ENCODE measurements at regions of chr2 and their contacts with region 1.

Region 1: GRCh38 chr2:230798769-230799399 is 65.9 kb upstream of the ITM2C start:
- DNase-seq: peak in 11 of 14 experiments; percentile 15 to 79 (median 40)
- ATAC-seq: peak; percentile 39
- H3K4me3 ChIP-seq: no peak overlapping the region
- H3K4me3 Mint-ChIP-seq: no peak overlapping the region
- H3K27ac ChIP-seq: no peak overlapping the region
- H3K27ac Mint-ChIP-seq: peak overlapping the region; percentile 82
- H3K4me1 ChIP-seq: peaks cover 35% of the 10 kb centered on the region
- H3K4me1 Mint-ChIP-seq: peaks cover 16% of the 10 kb centered on the region
- H3K27me3 ChIP-seq: no peaks in the 10 kb centered on the region
- H3K27me3 Mint-ChIP-seq: no peaks in the 10 kb centered on the region
- CTCF ChIP-seq: peak; percentile 82

Region 2: DNA sequence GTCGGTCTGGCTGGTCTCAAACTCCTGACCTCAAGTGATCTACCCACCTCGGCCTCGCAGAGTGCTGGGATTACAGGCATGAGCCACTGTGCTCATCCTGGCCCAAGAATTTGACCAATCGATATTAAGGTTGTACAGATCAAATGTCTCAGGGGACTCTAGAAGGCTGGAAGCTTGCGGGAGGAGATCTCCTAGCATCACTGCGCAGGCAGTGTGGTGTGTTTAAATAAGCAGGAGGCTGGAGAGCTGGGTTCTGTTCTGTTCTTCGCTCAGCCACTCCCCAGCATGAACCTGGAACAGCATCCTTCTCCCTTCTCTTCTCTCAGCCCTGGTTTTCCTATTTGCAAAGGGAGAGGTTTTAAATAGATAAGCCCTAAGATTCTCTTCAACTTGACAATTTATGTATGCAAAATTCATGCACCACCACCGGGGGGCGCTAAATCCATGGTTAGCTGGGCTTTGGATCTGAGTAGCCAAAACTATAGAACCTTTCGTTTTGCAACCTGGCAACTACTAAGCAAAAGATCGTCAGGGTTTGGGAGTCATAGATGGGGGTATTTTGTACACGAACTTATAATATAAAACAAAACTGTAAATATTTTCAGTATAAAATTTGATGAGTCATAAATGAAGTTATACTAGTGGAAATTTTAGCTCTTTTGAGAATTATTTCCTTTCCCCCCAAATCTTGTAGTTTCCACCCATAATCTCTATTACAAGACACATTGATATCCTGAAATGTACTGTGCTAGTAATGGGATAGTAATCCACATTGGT is 790.8 kb before region 1 on chr2:
- CTCF ChIA-PET with region 1: interaction called, 3 read pairs
- POLR2A ChIA-PET with region 1: no interaction called
- intact Hi-C with region 1: loop called (anchors 2 kb)
- DNase-seq: peak; percentile 67 to 86 (median 78)
- ATAC-seq: peak; percentile 72
- H3K4me3 ChIP-seq: no peak overlapping the region
- H3K4me3 Mint-ChIP-seq: peak overlapping the region; percentile 7
- H3K27ac ChIP-seq: no peak overlapping the region
- H3K27ac Mint-ChIP-seq: no peak overlapping the region
- H3K4me1 ChIP-seq: no peaks in the 10 kb centered on the region
- H3K4me1 Mint-ChIP-seq: no peaks in the 10 kb centered on the region
- H3K27me3 ChIP-seq: no peaks in the 10 kb centered on the region
- H3K27me3 Mint-ChIP-seq: no peaks in the 10 kb centered on the region
- CTCF ChIP-seq: peak; percentile 93

Region 3: GRCh38 chr2:230614913-230615332 is 184.0 kb before region 1 on chr2:
- CTCF ChIA-PET with region 1: interaction called, 4 read pairs
- POLR2A ChIA-PET with region 1: no interaction called
- intact Hi-C with region 1: loop called (anchors 1 to 5 kb)
- DNase-seq: peak in 3 of 14 experiments; percentile 15 to 52 (median 17)
- ATAC-seq: peak; percentile 43
- H3K4me3 ChIP-seq: no peak overlapping the region
- H3K4me3 Mint-ChIP-seq: no peak overlapping the region
- H3K27ac ChIP-seq: no peak overlapping the region
- H3K27ac Mint-ChIP-seq: no peak overlapping the region
- H3K4me1 ChIP-seq: peaks cover 17% of the 10 kb centered on the region
- H3K4me1 Mint-ChIP-seq: peaks cover 12% of the 10 kb centered on the region
- H3K27me3 ChIP-seq: no peaks in the 10 kb centered on the region
- H3K27me3 Mint-ChIP-seq: no peaks in the 10 kb centered on the region
- CTCF ChIP-seq: no peak

Region 4: GRCh38 chr2:230658877-230659652 is 139.8 kb before region 1 on chr2:
- CTCF ChIA-PET with region 1: interaction called, 7 read pairs
- POLR2A ChIA-PET with region 1: interaction called, 7 read pairs
- intact Hi-C with region 1: loop called in 1 of 2 experiments (anchors 5 kb)
- DNase-seq: peak in 6 of 14 experiments; percentile 16 to 66 (median 37)
- ATAC-seq: peak; percentile 40
- H3K4me3 ChIP-seq: peak overlapping the region; percentile 1
- H3K4me3 Mint-ChIP-seq: peak overlapping the region; percentile 65
- H3K27ac ChIP-seq: peak overlapping the region in 1 of 2 donors; percentile 18
- H3K27ac Mint-ChIP-seq: peak overlapping the region; percentile 90
- H3K4me1 ChIP-seq: peaks cover 87% of the 10 kb centered on the region
- H3K4me1 Mint-ChIP-seq: peaks cover 92% of the 10 kb centered on the region
- H3K27me3 ChIP-seq: no peaks in the 10 kb centered on the region
- H3K27me3 Mint-ChIP-seq: no peaks in the 10 kb centered on the region
- CTCF ChIP-seq: no peak

Region 5: DNA sequence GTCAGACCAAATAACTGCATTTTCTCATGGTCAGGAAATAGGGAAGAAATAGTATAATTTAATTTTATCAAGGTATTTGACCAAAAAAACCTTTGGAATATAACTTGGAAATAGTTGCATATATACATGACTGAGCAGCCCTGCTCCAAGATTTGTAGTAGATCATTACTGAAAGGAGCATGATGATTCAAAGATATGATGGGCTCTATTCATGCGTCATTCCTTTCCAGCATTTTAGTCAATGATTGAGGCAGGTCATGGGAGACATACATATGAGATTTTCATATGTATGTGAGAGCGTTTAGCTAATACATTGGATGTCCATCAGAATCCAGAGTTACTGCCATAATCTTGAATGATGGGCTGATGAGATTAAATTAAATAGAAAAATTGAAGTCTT is 11.8 kb before region 1 on chr2:
- CTCF ChIA-PET with region 1: interaction called, 13 read pairs
- POLR2A ChIA-PET with region 1: interaction called, 16 read pairs
- intact Hi-C with region 1: no loop called
- DNase-seq: no peak
- ATAC-seq: no peak
- H3K4me3 ChIP-seq: no peak overlapping the region
- H3K4me3 Mint-ChIP-seq: no peak overlapping the region
- H3K27ac ChIP-seq: no peak overlapping the region
- H3K27ac Mint-ChIP-seq: no peak overlapping the region
- H3K4me1 ChIP-seq: peaks cover 14% of the 10 kb centered on the region
- H3K4me1 Mint-ChIP-seq: peaks cover 57% of the 10 kb centered on the region
- H3K27me3 ChIP-seq: no peaks in the 10 kb centered on the region
- H3K27me3 Mint-ChIP-seq: no peaks in the 10 kb centered on the region
- CTCF ChIP-seq: no peak

Region 6: DNA sequence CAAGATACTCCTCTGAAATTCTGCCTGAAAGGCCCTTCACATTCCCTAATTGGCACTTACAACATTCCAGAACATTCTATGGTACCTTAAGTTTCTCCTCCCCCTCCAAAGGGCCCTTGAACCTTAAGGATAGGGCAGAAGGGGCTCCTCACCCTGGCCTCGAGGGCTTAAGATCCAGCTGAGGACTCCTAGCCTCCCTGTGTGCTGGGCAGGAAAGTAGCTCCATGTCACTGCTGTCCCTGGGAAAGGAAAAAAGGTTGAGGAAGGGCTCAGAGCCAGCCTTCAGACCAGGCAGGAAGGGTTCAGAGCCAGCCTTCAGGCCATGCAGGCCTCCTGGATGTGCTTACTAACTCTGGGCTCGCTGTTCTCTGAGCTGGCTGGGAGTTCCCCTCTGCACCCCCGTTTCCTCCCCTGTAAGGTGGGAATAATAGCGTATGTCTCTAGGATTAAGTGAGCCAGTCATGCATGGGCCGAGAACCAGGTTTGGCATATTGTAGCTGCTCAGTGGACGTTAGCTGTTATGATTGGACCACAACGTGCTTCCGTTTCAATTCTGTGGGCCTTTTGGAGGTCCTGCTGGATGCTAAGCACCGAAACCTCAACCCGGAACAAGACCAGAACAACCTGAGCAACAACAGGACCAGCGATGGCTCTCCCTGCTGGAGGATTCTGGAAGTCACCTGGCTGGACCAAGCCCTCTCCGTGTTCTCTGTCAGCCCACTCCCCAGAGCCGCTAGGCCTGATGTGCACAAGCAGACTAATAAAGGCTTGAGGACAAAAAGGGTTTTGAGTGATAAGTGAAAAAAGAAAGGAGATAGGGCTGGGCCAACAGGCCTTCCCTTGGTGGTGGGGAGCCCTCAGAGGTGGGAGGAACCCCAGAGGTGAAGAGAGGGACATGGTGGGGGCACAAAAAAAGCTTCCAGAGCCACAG is 595.6 kb after region 1 on chr2:
- CTCF ChIA-PET with region 1: no interaction called
- POLR2A ChIA-PET with region 1: no interaction called
- intact Hi-C with region 1: no loop called
- DNase-seq: no peak
- ATAC-seq: no peak
- H3K4me3 ChIP-seq: no peak overlapping the region
- H3K4me3 Mint-ChIP-seq: peak overlapping the region; percentile 20
- H3K27ac ChIP-seq: peak overlapping the region in 1 of 2 donors; percentile 1
- H3K27ac Mint-ChIP-seq: no peak overlapping the region
- H3K4me1 ChIP-seq: peaks cover 11% of the 10 kb centered on the region
- H3K4me1 Mint-ChIP-seq: peaks cover 11% of the 10 kb centered on the region
- H3K27me3 ChIP-seq: peaks cover 26 to 28% of the 10 kb centered on the region in 2 experiments
- H3K27me3 Mint-ChIP-seq: peaks cover 58% of the 10 kb centered on the region
- CTCF ChIP-seq: no peak

Region 7: GRCh38 chr2:232236200-232236599 is 1437.3 kb after region 1 on chr2:
- CTCF ChIA-PET with region 1: no interaction called
- POLR2A ChIA-PET with region 1: no interaction called
- intact Hi-C with region 1: no loop called
- DNase-seq: no peak
- ATAC-seq: no peak
- H3K4me3 ChIP-seq: no peak overlapping the region
- H3K4me3 Mint-ChIP-seq: no peak overlapping the region
- H3K27ac ChIP-seq: no peak overlapping the region
- H3K27ac Mint-ChIP-seq: no peak overlapping the region
- H3K4me1 ChIP-seq: peaks cover 18% of the 10 kb centered on the region
- H3K4me1 Mint-ChIP-seq: peaks cover 45% of the 10 kb centered on the region
- H3K27me3 ChIP-seq: no peaks in the 10 kb centered on the region
- H3K27me3 Mint-ChIP-seq: no peaks in the 10 kb centered on the region
- CTCF ChIP-seq: no peak